Activated naive CD4-positive, alpha-beta T cell treated with anti-CD3 and anti-CD28 coated beads for 36 hours (primary cell): ENCODE measurements at regions of chr5 and their contacts with region 1.

Region 1: GRCh38 chr5:149035372-149035790 is 27.5 kb downstream of the SH3TC2 start:
- DNase-seq: peak; percentile 89
- H3K4me3 Mint-ChIP-seq: no peak overlapping the region
- H3K27ac Mint-ChIP-seq: no peak overlapping the region
- H3K4me1 Mint-ChIP-seq: peaks cover 24% of the 10 kb centered on the region
- H3K27me3 Mint-ChIP-seq: no peaks in the 10 kb centered on the region

Region 2: DNA sequence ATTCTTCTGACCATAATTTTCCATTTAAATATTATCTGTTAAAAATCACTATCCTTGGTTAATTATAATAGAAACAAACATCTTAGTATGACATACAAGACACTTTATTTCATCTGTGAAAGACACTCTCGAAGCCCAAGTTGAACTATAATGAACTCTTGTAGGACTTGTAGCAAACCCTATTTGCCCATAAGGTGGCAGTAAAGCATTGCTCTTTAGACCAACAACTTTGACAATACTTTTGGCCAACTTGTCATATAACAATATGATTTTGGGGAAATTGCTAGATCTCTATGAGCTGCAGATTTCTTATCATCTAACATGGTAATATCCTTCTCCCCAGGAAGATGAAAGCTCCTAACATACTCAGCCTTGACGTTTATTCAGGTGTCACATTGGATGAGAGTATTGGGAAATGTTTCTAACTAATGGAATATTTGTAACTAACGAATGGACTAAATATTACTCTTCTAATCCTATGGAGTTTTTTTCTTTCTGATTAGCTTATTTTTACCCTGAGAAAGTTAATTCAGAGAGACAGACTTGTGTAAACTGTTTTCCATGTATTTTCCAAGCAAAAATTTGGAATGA is 856.1 kb before region 1 on chr5:
- CTCF ChIA-PET with region 1: interaction called, 4 read pairs
- intact Hi-C with region 1: loop called (anchors 5 kb)
- DNase-seq: peak; percentile 11
- H3K4me3 Mint-ChIP-seq: no peak overlapping the region
- H3K27ac Mint-ChIP-seq: no peak overlapping the region
- H3K4me1 Mint-ChIP-seq: no peaks in the 10 kb centered on the region
- H3K27me3 Mint-ChIP-seq: peaks cover 11% of the 10 kb centered on the region

Region 3: GRCh38 chr5:148826053-148826738 is 209.2 kb before region 1 on chr5 and contains the start of gene ADRB2:
- CTCF ChIA-PET with region 1: interaction called, 7 read pairs
- intact Hi-C with region 1: loop called (anchors 1 kb)
- DNase-seq: peak; percentile 90
- H3K4me3 Mint-ChIP-seq: peak within 1 kb of the TSS; percentile 78
- H3K27ac Mint-ChIP-seq: peak within 1 kb of the TSS; percentile 10
- H3K4me1 Mint-ChIP-seq: peaks cover 15% of the 10 kb centered on the region
- H3K27me3 Mint-ChIP-seq: peaks cover 23% of the 10 kb centered on the region
- total RNA-seq, gene ADRB2: 0.21 to 0.32 TPM

Region 4: GRCh38 chr5:148998174-148998797 is 37.1 kb before region 1 on chr5:
- CTCF ChIA-PET with region 1: interaction called, 11 read pairs
- intact Hi-C with region 1: loop called (anchors 1 kb)
- DNase-seq: peak; percentile 37
- H3K4me3 Mint-ChIP-seq: no peak overlapping the region
- H3K27ac Mint-ChIP-seq: no peak overlapping the region
- H3K4me1 Mint-ChIP-seq: no peaks in the 10 kb centered on the region
- H3K27me3 Mint-ChIP-seq: peaks cover 28% of the 10 kb centered on the region

Region 5: DNA sequence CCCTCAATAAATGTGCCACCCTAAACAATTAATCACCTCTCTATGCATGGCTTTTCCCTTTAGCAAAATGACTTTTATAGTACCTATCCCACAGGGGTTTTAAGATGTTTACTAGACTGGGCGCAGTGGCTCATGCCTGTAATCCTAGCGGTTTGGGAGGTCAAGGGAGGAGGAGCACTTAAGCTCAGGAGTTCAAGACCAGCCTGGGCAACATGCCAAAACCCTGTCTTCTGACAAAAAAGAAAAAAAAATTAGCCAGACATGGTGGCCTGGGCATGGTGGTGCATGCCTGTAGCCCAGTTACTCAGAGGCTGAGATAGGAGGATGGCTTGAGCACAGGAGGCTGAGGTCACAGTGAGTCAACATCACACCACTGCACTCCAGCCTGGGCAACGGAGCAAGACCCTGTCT is 14.0 kb after region 1 on chr5:
- CTCF ChIA-PET with region 1: interaction called, 13 read pairs
- intact Hi-C with region 1: no loop called
- DNase-seq: no peak
- H3K4me3 Mint-ChIP-seq: no peak overlapping the region
- H3K27ac Mint-ChIP-seq: no peak overlapping the region
- H3K4me1 Mint-ChIP-seq: no peaks in the 10 kb centered on the region
- H3K27me3 Mint-ChIP-seq: no peaks in the 10 kb centered on the region

Region 6: GRCh38 chr5:149128023-149128875 is 92.9 kb after region 1 on chr5:
- CTCF ChIA-PET with region 1: no interaction called
- intact Hi-C with region 1: no loop called
- DNase-seq: peak; percentile 38
- H3K4me3 Mint-ChIP-seq: no peak overlapping the region
- H3K27ac Mint-ChIP-seq: no peak overlapping the region
- H3K4me1 Mint-ChIP-seq: no peaks in the 10 kb centered on the region
- H3K27me3 Mint-ChIP-seq: no peaks in the 10 kb centered on the region

Region 7: DNA sequence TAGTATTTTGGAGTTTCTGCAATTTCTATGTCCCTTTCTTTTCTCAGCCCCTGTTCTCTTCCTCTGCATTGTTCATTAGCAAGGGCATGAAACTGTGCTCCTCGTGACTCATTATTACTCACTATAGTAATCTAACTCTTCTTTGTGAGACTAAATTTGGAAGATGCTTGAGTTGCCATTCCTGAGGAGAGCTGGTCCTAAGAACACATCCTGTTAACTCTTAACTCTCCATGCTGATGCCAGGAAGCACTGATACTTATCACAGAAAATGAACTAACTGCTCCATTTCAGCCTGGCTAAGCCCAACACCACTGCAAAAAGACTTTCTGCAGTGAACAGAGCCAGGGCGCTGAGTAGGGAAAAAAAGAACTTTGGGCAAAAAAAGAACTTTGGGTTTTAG is 526.5 kb after region 1 on chr5:
- CTCF ChIA-PET with region 1: no interaction called
- intact Hi-C with region 1: loop called (anchors 10 kb)
- DNase-seq: peak; percentile 20
- H3K4me3 Mint-ChIP-seq: no peak overlapping the region
- H3K27ac Mint-ChIP-seq: peak overlapping the region; percentile 70
- H3K4me1 Mint-ChIP-seq: peaks cover 32% of the 10 kb centered on the region
- H3K27me3 Mint-ChIP-seq: no peaks in the 10 kb centered on the region

Region 8: DNA sequence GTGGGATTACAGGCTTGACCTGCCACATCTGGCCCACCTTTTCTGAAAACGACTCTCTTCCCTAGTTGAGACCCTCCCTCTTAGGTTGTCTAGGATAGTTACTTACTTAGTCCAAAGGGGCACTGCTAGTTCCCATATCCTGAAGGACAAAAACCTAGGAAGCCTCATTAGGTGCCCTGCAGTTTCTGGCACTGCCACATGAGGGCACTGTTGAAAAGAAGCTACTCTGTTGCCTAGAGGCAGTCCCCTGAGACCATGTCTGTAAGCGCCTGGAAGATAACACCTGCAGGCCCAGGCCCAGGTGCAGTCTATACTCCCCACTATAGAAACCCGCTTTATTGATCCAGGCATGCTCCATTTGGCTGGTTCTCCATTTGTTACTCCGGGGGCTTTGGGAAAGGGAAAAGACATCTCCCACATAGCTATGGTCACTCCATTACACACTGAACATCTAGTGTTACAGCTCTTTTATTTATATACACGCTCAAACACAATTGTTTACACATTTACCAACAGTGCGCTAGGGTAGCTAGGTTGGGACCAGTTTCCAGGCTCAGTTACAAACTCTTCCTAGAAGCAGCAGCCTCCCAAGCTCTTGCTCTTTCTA is 621.3 kb after region 1 on chr5:
- CTCF ChIA-PET with region 1: no interaction called
- intact Hi-C with region 1: no loop called
- DNase-seq: peak; percentile 67
- H3K4me3 Mint-ChIP-seq: no peak overlapping the region
- H3K27ac Mint-ChIP-seq: no peak overlapping the region
- H3K4me1 Mint-ChIP-seq: no peaks in the 10 kb centered on the region
- H3K27me3 Mint-ChIP-seq: peaks cover 5% of the 10 kb centered on the region